PC-3 (cell line): ENCODE measurements at regions of chr7 and their contacts with region 1.

Region 1: GRCh38 chr7:140304191-140304799 is 94.0 kb downstream of the SLC37A3 start:
- DNase-seq: peak; percentile 22
- ATAC-seq: peak; percentile 48
- H3K4me3 ChIP-seq: no peak overlapping the region
- H3K27ac ChIP-seq: no peak overlapping the region
- H3K4me1 ChIP-seq: no peaks in the 10 kb centered on the region
- H3K27me3 ChIP-seq: no peaks in the 10 kb centered on the region
- CTCF ChIP-seq: peak; percentile 44; the same call in 1 of the 2 replicates

Region 2: DNA sequence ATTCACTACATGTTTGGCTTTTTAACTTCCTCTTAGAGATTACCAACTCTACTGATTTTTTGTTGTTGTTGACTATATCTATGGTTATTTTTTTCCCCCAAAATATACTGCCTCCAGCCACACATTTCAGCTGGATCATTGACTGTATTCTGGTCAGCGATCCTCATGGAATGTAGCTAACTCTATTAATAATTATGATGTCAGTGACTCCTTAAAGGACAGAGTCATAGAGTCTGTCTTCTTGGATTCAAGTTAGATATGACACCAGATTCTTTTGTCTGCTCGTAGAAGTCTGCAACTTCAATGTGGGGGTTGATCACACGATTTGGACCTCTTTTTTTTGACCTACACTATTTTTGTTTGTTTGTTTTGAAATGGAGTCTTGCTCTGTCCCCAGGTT is 1040.1 kb before region 1 on chr7:
- CTCF ChIA-PET with region 1: no interaction called
- POLR2A ChIA-PET with region 1: interaction called, 10 read pairs
- intact Hi-C with region 1: no loop called
- DNase-seq: no peak
- ATAC-seq: no peak
- H3K4me3 ChIP-seq: no peak overlapping the region
- H3K27ac ChIP-seq: no peak overlapping the region
- H3K4me1 ChIP-seq: no peaks in the 10 kb centered on the region
- H3K27me3 ChIP-seq: no peaks in the 10 kb centered on the region
- CTCF ChIP-seq: no peak

Region 3: GRCh38 chr7:140159487-140159886 is 144.8 kb before region 1 on chr7:
- CTCF ChIA-PET with region 1: no interaction called
- POLR2A ChIA-PET with region 1: no interaction called
- intact Hi-C with region 1: no loop called
- DNase-seq: no peak
- ATAC-seq: no peak
- H3K4me3 ChIP-seq: no peak overlapping the region
- H3K27ac ChIP-seq: no peak overlapping the region
- H3K4me1 ChIP-seq: no peaks in the 10 kb centered on the region
- H3K27me3 ChIP-seq: no peaks in the 10 kb centered on the region
- CTCF ChIP-seq: no peak

Region 4: GRCh38 chr7:140249036-140249806 is 55.1 kb before region 1 on chr7:
- CTCF ChIA-PET with region 1: no interaction called
- POLR2A ChIA-PET with region 1: no interaction called
- intact Hi-C with region 1: no loop called
- DNase-seq: no peak
- ATAC-seq: no peak
- H3K4me3 ChIP-seq: no peak overlapping the region
- H3K27ac ChIP-seq: no peak overlapping the region
- H3K4me1 ChIP-seq: peaks cover 5% of the 10 kb centered on the region
- H3K27me3 ChIP-seq: no peaks in the 10 kb centered on the region
- CTCF ChIP-seq: no peak